ENCODE measurements at regions of chr2 and their contacts with region 1.

Region 1: GRCh38 chr2:76731157-76731556 is 791.0 kb downstream of the LRRTM4 start:
- DNase-seq: no peak
- ATAC-seq: no peak
- H3K4me3 Mint-ChIP-seq: no peak overlapping the region
- H3K27ac Mint-ChIP-seq: no peak overlapping the region
- H3K4me1 Mint-ChIP-seq: peaks cover 21% of the 10 kb centered on the region
- H3K27me3 Mint-ChIP-seq: no peaks in the 10 kb centered on the region
- CTCF ChIP-seq: no peak

Region 2: GRCh38 chr2:77192811-77193289 is 461.7 kb after region 1 on chr2:
- CTCF ChIA-PET with region 1: no interaction called
- POLR2A ChIA-PET with region 1: interaction called, 13 read pairs
- DNase-seq: no peak
- ATAC-seq: no peak
- H3K4me3 Mint-ChIP-seq: no peak overlapping the region
- H3K27ac Mint-ChIP-seq: no peak overlapping the region
- H3K4me1 Mint-ChIP-seq: no peaks in the 10 kb centered on the region
- H3K27me3 Mint-ChIP-seq: no peaks in the 10 kb centered on the region
- CTCF ChIP-seq: no peak

Region 3: DNA sequence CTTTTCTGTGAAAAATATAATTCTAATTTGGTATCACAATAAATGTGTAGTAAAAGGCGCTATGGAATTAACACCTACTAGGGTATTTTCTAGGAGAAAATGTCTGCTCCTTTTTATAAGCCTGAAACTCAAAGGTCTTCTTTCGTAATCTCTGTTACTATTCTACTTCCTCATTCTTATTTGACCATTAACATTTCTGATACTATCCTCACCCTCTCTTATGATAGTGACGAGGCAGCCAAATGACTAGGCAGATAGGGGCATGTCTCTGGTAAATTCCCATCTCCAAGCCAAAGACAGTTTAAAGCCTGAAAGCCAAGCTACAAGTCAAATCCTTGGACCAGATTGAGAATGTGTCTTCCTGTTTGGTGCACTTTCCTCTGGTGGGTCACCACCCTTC is 539.3 kb after region 1 on chr2:
- CTCF ChIA-PET with region 1: no interaction called
- POLR2A ChIA-PET with region 1: no interaction called
- DNase-seq: no peak
- ATAC-seq: no peak
- H3K4me3 Mint-ChIP-seq: no peak overlapping the region
- H3K27ac Mint-ChIP-seq: no peak overlapping the region
- H3K4me1 Mint-ChIP-seq: no peaks in the 10 kb centered on the region
- H3K27me3 Mint-ChIP-seq: no peaks in the 10 kb centered on the region
- CTCF ChIP-seq: no peak